H1 (cell line): ENCODE measurements at regions of chr20 and their contacts with region 1.

Region 1: GRCh38 chr20:59087829-59088433 is 45.3 kb upstream of the PRELID3B start:
- DNase-seq: peak; percentile 43 to 92
- H3K4me3 ChIP-seq: no peak overlapping the region
- H3K27ac ChIP-seq: no peak overlapping the region
- H3K4me1 ChIP-seq: no peaks in the 10 kb centered on the region
- H3K27me3 ChIP-seq: 0 out of 7 replicates have a peak, but pooled peaks cover 0 to 2% (median 0%) of the 10 kb centered on the region in 4 experiments
- CTCF ChIP-seq: peak; percentile 78 to 89 (median 79)
- EP300 ChIP-seq: no peak
- POLR2A ChIP-seq: no peak
- RAD21 ChIP-seq: peak; percentile 78 to 87

Region 2: GRCh38 chr20:58963064-58963584 is 124.8 kb before region 1 on chr20:
- CTCF ChIA-PET with region 1: no interaction called
- POLR2A ChIA-PET with region 1: no interaction called
- DNase-seq: no peak
- H3K4me3 ChIP-seq: no peak overlapping the region
- H3K27ac ChIP-seq: no peak overlapping the region
- H3K4me1 ChIP-seq: peaks cover 0 to 4% (median 0%) of the 10 kb centered on the region in 4 experiments; a peak in 1 of 7 replicates
- H3K27me3 ChIP-seq: no peaks in the 10 kb centered on the region
- CTCF ChIP-seq: peak; percentile 5 to 24 (median 14); a peak in 3 of 4 replicates
- EP300 ChIP-seq: no peak
- POLR2A ChIP-seq: no peak
- RAD21 ChIP-seq: peak; percentile 16 to 26; a peak in 2 of 4 replicates

Region 3: DNA sequence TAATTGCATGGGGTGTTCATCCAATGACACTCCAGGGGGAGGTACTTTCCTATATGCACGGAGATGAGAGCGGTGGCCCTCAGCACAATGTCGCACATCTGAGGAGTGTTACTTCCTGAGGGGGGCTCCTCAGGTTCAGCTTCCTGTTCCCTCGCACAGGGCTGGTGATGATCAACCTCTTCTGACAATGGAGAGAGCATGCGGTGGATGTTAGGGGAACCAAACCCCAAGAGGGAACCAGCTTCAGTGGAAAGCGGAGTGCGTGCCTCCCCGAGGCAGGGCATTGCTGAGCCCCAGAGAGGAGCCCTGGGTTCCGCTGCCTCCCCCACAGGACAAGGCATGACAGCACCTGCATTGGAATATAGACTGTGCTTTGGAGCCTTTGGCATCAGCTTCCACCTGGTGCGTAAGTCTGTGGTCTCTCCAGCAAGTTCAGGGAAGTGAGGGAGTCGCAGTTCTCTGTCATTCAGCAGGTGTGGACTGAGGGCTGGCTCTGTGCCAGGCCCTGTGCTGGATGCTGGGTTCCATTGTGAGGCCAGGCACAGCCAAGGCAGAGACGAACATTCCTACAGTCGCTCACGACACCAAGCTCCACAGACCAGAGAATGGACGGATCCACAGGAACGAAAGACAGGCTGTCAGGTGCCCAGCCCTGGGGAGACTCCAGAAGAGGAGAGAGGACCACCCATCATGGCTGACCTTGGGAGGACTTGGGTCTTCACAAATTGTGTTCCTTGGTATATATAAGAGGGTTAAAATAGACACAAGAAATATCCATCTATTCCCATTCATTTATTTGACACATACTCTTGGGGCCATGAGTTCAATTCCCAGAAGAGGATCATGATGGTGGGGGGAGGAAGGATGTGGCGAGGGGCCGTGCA is 71.8 kb after region 1 on chr20:
- CTCF ChIA-PET with region 1: interaction called, 20 read pairs
- POLR2A ChIA-PET with region 1: no interaction called
- DNase-seq: no peak
- H3K4me3 ChIP-seq: no peak overlapping the region
- H3K27ac ChIP-seq: no peak overlapping the region
- H3K4me1 ChIP-seq: peaks cover 2 to 6% (median 4%) of the 10 kb centered on the region in 4 experiments; a peak in 6 of 7 replicates
- H3K27me3 ChIP-seq: no peaks in the 10 kb centered on the region
- CTCF ChIP-seq: no peak
- EP300 ChIP-seq: no peak
- POLR2A ChIP-seq: no peak
- RAD21 ChIP-seq: no peak